Breast epithelium (tissue), 4 donors: ENCODE measurements at regions of chrX and their contacts with region 1.

Region 1: DNA sequence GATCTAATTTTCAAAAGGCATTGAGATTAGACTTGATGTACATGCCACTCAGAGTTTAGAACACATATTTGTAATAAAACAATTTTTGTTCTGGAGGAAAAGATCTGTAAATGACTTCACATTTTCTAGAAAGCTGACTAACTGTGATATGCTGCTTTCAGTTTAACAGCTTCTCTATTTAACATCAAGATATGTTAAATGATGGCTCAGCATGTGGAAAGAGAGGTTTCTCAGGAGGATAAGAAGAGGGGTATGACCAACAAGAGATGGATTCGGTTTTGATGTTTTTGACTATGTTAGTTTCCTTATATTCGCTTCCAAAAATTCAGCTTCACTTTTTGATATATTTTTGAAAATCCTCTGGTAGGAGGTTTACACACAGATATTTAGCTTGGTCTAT is 698.7 kb downstream of the GLUD2 start:
- DNase-seq: no peak
- H3K4me3 ChIP-seq: no peak overlapping the region
- H3K27ac ChIP-seq: no peak overlapping the region
- H3K4me1 ChIP-seq: no peaks in the 10 kb centered on the region
- H3K27me3 ChIP-seq: no peaks in the 10 kb centered on the region
- CTCF ChIP-seq: no peak
- POLR2A ChIP-seq: no peak

Region 2: GRCh38 chrX:121333942-121334341 is 412.2 kb before region 1 on chrX:
- intact Hi-C with region 1: no loop called
- DNase-seq: no peak
- H3K4me3 ChIP-seq: no peak overlapping the region
- H3K27ac ChIP-seq: no peak overlapping the region
- H3K4me1 ChIP-seq: no peaks in the 10 kb centered on the region
- H3K27me3 ChIP-seq: peaks cover 0 to 4% of the 10 kb centered on the region in 2 donors
- CTCF ChIP-seq: no peak
- POLR2A ChIP-seq: no peak

Region 3: GRCh38 chrX:121975671-121976070 is 229.6 kb after region 1 on chrX:
- intact Hi-C with region 1: loop called (anchors 5 kb)
- DNase-seq: no peak
- H3K4me3 ChIP-seq: no peak overlapping the region
- H3K27ac ChIP-seq: no peak overlapping the region
- H3K4me1 ChIP-seq: no peaks in the 10 kb centered on the region
- H3K27me3 ChIP-seq: no peaks in the 10 kb centered on the region
- CTCF ChIP-seq: no peak
- POLR2A ChIP-seq: no peak

Region 4: DNA sequence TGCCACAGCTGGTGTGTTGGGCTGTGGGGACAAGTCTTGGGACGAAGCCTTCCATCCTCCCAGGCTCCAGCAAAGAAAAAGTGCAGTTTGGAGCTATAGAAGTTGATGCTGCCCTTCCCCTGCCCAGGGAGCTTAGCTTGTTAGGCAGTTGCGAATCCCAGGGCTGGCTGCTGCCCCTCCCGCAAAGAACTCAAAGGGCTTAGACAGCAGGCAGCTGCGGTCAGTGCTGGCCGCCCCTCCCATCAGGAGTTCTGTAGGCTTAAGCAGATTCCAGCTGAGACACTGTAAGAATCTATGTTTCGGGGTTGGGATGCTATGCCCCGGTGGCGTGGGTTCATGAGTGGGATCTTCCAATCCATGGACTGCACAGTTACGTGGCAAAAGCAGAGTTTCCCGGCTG is 258.0 kb after region 1 on chrX:
- intact Hi-C with region 1: no loop called
- DNase-seq: no peak
- H3K4me3 ChIP-seq: no peak overlapping the region
- H3K27ac ChIP-seq: no peak overlapping the region
- H3K4me1 ChIP-seq: no peaks in the 10 kb centered on the region
- H3K27me3 ChIP-seq: no peaks in the 10 kb centered on the region
- CTCF ChIP-seq: no peak
- POLR2A ChIP-seq: no peak